Activated T-helper 2 cell treated with anti-CD3 and anti-CD28 coated beads, Interferon-gamma antibody, Interleukin-2, Interleukin-4, amounts not matched to agents 10 μg/mL and 5 μg/mL and 100 μg/mL, durations not matched to agents 14 hours and 24 hours and 36 hours (primary cell): ENCODE measurements at regions of chr5 and their contacts with region 1.

Region 1: GRCh38 chr5:90434116-90434714 is 24.7 kb upstream of the CETN3 start:
- DNase-seq: no peak
- H3K4me3 Mint-ChIP-seq: no peak overlapping the region
- H3K27ac Mint-ChIP-seq: no peak overlapping the region
- H3K4me1 Mint-ChIP-seq: peaks cover 9% of the 10 kb centered on the region
- H3K27me3 Mint-ChIP-seq: peaks cover 35% of the 10 kb centered on the region

Region 2: GRCh38 chr5:90248640-90249039 is 185.6 kb before region 1 on chr5:
- intact Hi-C with region 1: no loop called
- DNase-seq: no peak
- H3K4me3 Mint-ChIP-seq: no peak overlapping the region
- H3K27ac Mint-ChIP-seq: no peak overlapping the region
- H3K4me1 Mint-ChIP-seq: no peaks in the 10 kb centered on the region
- H3K27me3 Mint-ChIP-seq: no peaks in the 10 kb centered on the region

Region 3: DNA sequence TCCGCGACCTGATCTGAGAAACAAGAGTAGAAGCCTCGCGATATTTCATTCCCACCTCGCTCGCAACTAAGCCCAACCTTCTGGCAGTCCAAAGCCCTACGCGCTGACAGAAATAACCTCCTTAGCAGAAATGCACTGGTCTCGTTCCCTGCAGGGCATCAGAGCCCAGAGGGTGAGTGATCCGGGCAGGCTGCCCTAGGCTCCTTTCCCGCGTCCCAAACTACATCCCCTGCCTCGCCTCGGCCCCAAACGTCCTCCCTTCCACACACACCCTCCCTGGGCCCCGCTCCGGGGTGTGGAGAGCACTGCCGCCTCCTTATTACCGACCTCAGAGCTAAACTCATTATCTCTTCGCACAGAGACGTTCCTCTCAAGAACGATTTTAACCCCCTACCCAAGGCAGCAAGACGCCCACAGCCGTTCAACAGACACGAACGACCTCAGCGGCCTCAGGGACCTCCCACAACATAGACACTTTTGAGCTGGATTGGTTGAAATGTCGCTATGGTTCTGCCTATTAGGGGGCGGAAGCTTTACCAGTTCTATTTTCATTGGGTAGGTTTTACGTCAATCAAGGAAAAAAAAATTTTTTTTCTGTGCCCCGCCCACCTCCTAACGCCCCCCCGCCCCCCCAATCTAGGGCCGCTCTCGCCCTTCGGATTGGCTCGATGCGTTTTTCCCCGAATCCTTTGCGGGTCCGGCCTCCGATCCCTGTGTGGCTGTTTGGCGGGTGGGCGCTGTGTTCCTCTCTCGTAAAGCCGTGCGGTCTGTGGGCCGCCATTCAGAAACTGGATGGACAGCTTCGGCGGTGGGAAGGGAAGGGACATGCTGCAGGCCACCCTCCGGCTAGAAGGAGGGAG is 24.7 kb before region 1 on chr5 and contains the start of gene CETN3:
- intact Hi-C with region 1: loop called (anchors 2 kb)
- DNase-seq: peak; percentile 88
- H3K4me3 Mint-ChIP-seq: no peak within 1 kb of the TSS
- H3K27ac Mint-ChIP-seq: no peak within 1 kb of the TSS
- H3K4me1 Mint-ChIP-seq: peaks cover 16% of the 10 kb centered on the region
- H3K27me3 Mint-ChIP-seq: peaks cover 2% of the 10 kb centered on the region
- total RNA-seq, gene CETN3: 44.4 and 49.2 TPM in 2 replicates

Region 4: DNA sequence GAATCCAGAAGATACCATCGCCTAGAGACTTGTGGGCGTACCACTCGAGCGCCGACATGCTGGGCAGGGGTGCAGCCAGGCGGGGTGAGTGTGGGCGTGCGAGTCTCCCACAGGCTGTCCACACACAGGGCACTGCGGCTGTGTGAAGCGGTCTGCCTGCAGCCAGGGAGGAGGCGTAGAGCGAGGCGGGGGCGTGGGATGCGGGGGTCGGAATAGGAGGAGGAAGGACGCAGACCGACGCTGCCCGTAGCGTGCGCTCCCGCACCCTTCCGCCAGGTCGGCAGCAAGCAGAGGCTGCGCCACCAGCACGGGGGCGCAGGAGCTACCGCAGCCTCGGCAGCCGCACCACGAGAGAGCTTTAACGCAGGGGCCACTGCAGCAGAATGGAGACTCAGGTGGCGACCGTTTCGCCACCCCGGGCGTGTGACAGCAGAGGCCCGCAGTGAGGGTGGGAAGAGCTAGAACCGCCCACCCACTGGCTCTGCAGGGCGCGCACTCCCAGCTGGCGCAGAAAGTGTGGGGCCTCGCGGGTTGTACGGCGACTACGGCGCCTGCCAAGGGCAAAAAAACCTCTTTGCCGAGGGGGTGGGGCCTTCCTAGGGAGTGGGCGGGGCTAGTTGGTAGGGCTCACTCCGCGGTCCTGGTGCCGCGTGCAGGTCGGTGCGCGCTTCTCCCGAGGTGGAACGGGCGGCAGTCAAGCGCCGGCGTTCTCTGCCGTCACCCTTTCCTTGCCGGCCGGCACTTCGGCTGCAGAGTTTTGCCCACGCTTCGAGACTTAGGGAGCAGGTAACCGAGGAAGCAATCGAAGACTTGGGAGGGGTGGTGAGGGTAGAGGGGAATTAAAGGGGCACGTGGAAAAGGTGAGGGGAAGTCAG is 40.3 kb after region 1 on chr5 and contains the starts of genes MBLAC2 and POLR3G:
- intact Hi-C with region 1: loop called (anchors 2 kb)
- DNase-seq: peak; percentile 88
- H3K4me3 Mint-ChIP-seq: peak within 1 kb of the TSS; percentile 90
- H3K27ac Mint-ChIP-seq: peak within 1 kb of the TSS; percentile 87
- H3K4me1 Mint-ChIP-seq: peaks cover 35% of the 10 kb centered on the region
- H3K27me3 Mint-ChIP-seq: no peaks in the 10 kb centered on the region
- total RNA-seq, gene MBLAC2: 6.1 and 6.4 TPM in 2 replicates
- total RNA-seq, gene POLR3G: 17.1 and 18.6 TPM in 2 replicates

Region 5: DNA sequence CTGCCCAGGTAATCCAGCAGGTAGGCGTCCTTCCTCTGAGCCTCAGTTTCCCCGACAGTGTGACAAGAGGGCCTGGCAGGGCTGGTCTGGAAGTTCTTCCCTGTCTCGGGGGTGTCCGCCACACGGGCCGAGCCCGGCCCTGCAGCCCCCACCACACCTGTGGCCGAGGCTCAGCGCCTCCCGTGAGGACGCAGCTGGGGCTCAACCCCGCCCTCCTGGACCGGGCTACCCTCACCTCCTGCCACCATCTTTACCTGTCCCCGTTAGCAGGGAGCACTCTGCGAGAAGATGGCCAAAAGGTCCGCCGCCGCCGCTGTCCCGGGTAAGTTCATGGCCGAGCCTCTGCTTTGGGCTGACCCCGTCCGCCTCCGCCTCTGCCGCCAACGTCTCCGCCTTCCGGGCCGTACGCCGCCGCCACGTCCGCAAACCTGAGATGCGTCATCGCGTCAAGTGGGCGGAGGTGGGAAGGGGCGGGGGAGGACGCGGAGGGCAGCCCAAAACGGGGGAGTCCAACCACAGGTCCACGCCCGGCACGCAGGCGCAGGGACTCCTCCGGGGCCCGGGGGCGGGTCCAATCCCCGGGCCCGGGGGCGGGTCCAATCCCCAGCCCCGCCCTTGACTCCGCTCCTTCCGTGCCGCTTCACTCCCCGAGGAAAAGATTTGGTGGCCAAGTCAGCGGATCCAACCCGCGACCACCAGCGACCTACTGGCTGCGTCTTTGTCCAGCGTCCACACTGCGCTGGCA is 95.2 kb after region 1 on chr5 and contains the start of gene LYSMD3:
- intact Hi-C with region 1: loop called (anchors 1 kb)
- DNase-seq: peak; percentile 93
- H3K4me3 Mint-ChIP-seq: peak within 1 kb of the TSS; percentile 98
- H3K27ac Mint-ChIP-seq: peak within 1 kb of the TSS; percentile 95
- H3K4me1 Mint-ChIP-seq: peaks cover 19% of the 10 kb centered on the region
- H3K27me3 Mint-ChIP-seq: peaks cover 11% of the 10 kb centered on the region
- total RNA-seq, gene LYSMD3: 13.5 and 13.7 TPM in 2 replicates

Region 6: DNA sequence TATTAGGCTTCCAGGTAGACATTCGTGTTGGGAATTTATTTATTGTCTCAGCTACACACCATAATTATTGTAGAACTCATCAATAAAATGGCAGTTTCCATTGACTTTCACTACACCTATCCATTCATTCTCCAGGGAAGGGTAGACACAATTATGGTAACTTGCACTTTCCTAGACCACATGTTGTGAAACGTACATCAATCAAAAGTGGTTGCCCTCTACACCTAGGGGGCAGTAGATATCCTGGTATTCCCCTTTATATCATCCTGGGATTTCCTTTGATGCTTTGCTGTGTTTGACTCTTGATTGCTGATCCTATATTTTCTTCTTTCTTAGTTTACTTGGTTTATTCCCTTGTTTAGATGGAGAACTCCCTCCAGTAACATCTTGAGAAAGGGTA is 172.3 kb after region 1 on chr5:
- intact Hi-C with region 1: loop called (anchors 1 kb)
- DNase-seq: no peak
- H3K4me3 Mint-ChIP-seq: no peak overlapping the region
- H3K27ac Mint-ChIP-seq: no peak overlapping the region
- H3K4me1 Mint-ChIP-seq: peaks cover 2% of the 10 kb centered on the region
- H3K27me3 Mint-ChIP-seq: no peaks in the 10 kb centered on the region

Region 7: GRCh38 chr5:90783460-90784333 is 349.5 kb after region 1 on chr5:
- intact Hi-C with region 1: loop called (anchors 1 kb)
- DNase-seq: peak; percentile 40
- H3K4me3 Mint-ChIP-seq: no peak overlapping the region
- H3K27ac Mint-ChIP-seq: no peak overlapping the region
- H3K4me1 Mint-ChIP-seq: no peaks in the 10 kb centered on the region
- H3K27me3 Mint-ChIP-seq: peaks cover 3% of the 10 kb centered on the region